ENCODE measurements at regions of chr11 and their contacts with region 1.

Region 1: DNA sequence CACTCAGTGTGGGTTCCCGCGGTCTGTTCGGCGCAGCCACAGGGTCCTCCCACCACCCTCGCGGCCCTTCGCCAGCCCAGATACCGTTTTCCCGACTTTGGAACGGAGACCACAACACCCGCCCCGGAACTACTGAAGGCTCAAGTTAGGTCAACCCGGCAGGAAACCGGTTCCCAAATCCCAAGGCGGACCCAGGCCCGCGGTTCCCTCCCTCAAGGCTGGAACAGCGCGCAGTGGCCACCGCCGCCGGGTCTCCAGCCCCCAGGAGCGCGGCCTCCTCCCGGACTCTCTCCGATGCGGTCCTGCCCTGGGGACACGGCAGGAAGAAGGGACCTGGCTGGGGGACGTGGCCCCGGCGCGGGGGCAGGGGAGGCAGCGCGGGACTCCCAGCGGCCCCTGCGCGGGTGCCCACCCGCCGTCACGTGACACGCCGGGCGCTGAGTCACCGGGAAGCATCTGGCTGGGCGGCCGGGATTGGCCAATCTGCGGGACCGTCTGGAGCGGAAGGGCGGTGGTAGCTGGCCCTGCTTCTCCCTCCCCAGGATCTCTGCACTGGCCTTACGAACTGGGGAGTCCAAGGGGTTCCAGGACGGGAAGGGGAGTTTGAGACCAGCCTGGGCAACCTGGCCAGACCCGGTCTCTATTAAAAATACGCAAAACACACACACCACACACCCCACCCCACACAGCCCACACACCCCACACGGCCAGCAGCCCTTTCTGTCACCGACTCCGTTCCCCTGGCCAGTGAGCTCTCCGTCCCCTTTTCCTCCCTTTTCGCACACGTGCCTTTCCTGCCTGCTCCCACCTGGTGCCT is 21.5 kb upstream of the MALAT1 start:
- DNase-seq: peak; percentile 71 to 94 (median 91)
- ATAC-seq: peak; percentile 78
- H3K4me3 ChIP-seq: peak overlapping the region; percentile 89 to 92
- H3K4me3 Mint-ChIP-seq: peak overlapping the region; percentile 100
- H3K27ac ChIP-seq: peak overlapping the region; percentile 89 to 98
- H3K27ac Mint-ChIP-seq: peak overlapping the region; percentile 100
- H3K4me1 ChIP-seq: peaks cover 12% of the 10 kb centered on the region
- H3K4me1 Mint-ChIP-seq: peaks cover 21% of the 10 kb centered on the region
- H3K27me3 ChIP-seq: no peaks in the 10 kb centered on the region
- H3K27me3 Mint-ChIP-seq: no peaks in the 10 kb centered on the region
- CTCF ChIP-seq: no peak

Region 2: GRCh38 chr11:65487413-65488272 is 10.3 kb after region 1 on chr11:
- CTCF ChIA-PET with region 1: interaction called, 9 read pairs
- POLR2A ChIA-PET with region 1: interaction called, 28 read pairs
- intact Hi-C with region 1: no loop called
- DNase-seq: peak in 1 of 9 experiments; percentile 56
- ATAC-seq: peak; percentile 41
- H3K4me3 ChIP-seq: no peak overlapping the region
- H3K4me3 Mint-ChIP-seq: peak overlapping the region; percentile 42
- H3K27ac ChIP-seq: no peak overlapping the region
- H3K27ac Mint-ChIP-seq: peak overlapping the region; percentile 7
- H3K4me1 ChIP-seq: peaks cover 17% of the 10 kb centered on the region
- H3K4me1 Mint-ChIP-seq: peaks cover 19% of the 10 kb centered on the region
- H3K27me3 ChIP-seq: no peaks in the 10 kb centered on the region
- H3K27me3 Mint-ChIP-seq: no peaks in the 10 kb centered on the region
- CTCF ChIP-seq: no peak